GM12878 (cell line): ENCODE measurements at regions of chr20 and their contacts with region 1.

Region 1: DNA sequence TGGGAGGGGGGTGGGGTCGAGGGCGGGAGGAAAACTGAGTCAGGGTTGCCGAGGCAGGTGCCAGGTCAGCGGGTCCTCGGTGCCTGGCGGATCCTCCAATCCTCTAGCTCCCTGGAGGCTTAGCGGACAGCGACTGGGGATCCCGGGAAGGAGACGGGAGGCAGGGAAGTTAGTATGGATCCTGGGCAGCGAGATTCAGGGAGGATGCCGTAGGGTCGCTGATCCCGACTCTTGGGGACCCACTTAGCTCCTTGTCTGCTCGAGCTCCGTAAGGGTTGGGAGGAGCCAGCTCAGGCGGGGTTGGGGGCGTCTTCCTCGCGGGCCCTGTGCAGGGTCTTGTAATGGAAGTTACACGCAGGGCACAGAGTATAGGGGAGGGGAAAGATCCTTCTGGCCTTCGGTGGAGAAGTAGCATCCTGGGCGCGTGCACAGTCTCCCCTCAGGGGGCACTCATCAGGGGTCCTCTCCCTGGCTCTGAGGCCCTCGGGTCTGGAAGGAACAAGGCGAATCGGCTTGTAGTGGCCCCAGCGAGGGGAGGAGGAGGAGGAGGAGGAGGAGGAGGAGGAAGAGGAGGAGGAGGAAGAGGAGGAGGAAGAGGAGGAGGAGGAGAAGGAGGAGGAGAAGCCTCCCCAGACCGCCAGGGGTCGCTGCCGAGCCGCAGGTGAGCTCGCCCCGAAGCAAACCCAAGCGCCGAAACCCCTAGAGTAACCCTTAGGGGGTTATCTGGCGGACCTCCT is 6.4 kb upstream of the SLC12A5 start:
- DNase-seq: no peak
- ATAC-seq: peak; percentile 84
- H3K4me3 ChIP-seq: peak overlapping the region; percentile 38; the same call in 1 of the 2 replicates
- H3K27ac ChIP-seq: no peak overlapping the region
- H3K4me1 ChIP-seq: no peaks in the 10 kb centered on the region
- H3K27me3 ChIP-seq: peaks cover 2 to 4% of the 10 kb centered on the region in 2 experiments; a peak in 2 of 4 replicates
- CTCF ChIP-seq: peak; percentile 69 to 88 (median 71)
- EP300 ChIP-seq: no peak
- POLR2A ChIP-seq: no peak
- RAD21 ChIP-seq: peak; percentile 75

Region 2: GRCh38 chr20:45987108-45987780 is 35.3 kb before region 1 on chr20:
- CTCF ChIA-PET with region 1: interaction called, 13 read pairs
- POLR2A ChIA-PET with region 1: no interaction called
- RAD21 ChIA-PET with region 1: interaction called, 10 read pairs
- SMC1A ChIA-PET with region 1: interaction called, 3 read pairs
- in situ Hi-C with region 1: no loop called
- intact Hi-C with region 1: no loop called
- DNase-seq: no peak
- ATAC-seq: peak; percentile 100
- H3K4me3 ChIP-seq: no peak overlapping the region
- H3K27ac ChIP-seq: no peak overlapping the region
- H3K4me1 ChIP-seq: peaks cover 6% of the 10 kb centered on the region
- H3K27me3 ChIP-seq: no peaks in the 10 kb centered on the region; a peak in 1 of 4 replicates
- CTCF ChIP-seq: peak; percentile 92 to 96 (median 93)
- EP300 ChIP-seq: no peak
- POLR2A ChIP-seq: no peak
- RAD21 ChIP-seq: peak; percentile 83

Region 3: GRCh38 chr20:46078954-46079353 is 56.4 kb after region 1 on chr20:
- CTCF ChIA-PET with region 1: interaction called, 11 read pairs
- POLR2A ChIA-PET with region 1: no interaction called
- RAD21 ChIA-PET with region 1: interaction called, 3 read pairs
- SMC1A ChIA-PET with region 1: no interaction called
- in situ Hi-C with region 1: no loop called
- intact Hi-C with region 1: no loop called
- DNase-seq: no peak
- ATAC-seq: no peak
- H3K4me3 ChIP-seq: no peak overlapping the region
- H3K27ac ChIP-seq: no peak overlapping the region
- H3K4me1 ChIP-seq: no peaks in the 10 kb centered on the region
- H3K27me3 ChIP-seq: no peaks in the 10 kb centered on the region
- CTCF ChIP-seq: no peak
- EP300 ChIP-seq: no peak
- POLR2A ChIP-seq: no peak; the same call in 1 of the 2 replicates
- RAD21 ChIP-seq: no peak

Region 4: DNA sequence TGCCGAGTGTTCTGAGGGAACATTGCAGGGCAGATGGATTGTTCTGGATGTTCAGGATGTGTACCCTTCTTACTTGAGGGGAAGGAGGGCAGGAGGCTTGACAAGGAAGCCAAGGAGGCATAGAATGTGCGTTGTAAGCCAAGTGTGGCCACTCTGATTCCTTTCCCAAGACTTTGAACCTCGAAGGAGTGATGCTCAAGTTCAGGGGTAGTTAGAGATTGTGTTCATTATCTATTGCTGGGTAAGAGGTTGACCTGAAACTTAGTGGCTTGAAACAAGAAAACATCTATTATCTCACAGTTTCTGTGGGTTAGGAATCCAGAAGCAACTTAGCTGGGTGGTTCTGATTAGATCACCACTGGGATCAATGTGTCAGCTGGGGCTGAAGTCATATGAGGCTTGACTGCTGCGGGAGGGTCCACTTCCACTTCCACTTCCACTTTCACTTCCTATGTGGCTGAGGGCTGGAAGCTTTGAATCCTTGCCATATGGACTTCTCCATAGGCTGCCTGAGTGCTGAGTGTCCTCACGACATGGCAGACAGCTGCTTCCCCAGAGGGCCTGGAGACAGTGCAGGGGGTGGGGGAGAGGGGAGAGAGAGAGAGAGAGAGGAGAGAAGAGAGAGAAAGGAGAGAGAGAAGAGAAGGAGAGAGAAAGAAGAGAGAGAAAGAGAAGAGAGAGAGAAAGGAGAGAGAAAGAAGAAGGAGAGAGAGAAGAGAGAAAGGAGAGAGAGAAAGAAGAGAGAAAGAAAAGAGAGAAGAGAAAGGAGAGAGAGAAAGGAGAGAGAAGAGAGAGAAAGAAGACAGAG is 88.7 kb after region 1 on chr20:
- CTCF ChIA-PET with region 1: interaction called, 10 read pairs
- POLR2A ChIA-PET with region 1: interaction called, 6 read pairs
- RAD21 ChIA-PET with region 1: interaction called, 5 read pairs
- SMC1A ChIA-PET with region 1: interaction called, 7 read pairs
- in situ Hi-C with region 1: no loop called
- intact Hi-C with region 1: no loop called
- DNase-seq: peak; percentile 75
- ATAC-seq: peak; percentile 77
- H3K4me3 ChIP-seq: peak overlapping the region; percentile 7; the same call in 1 of the 2 replicates
- H3K27ac ChIP-seq: no peak overlapping the region
- H3K4me1 ChIP-seq: peaks cover 37% of the 10 kb centered on the region
- H3K27me3 ChIP-seq: no peaks in the 10 kb centered on the region
- CTCF ChIP-seq: no peak
- EP300 ChIP-seq: peak; percentile 33 to 51; a peak in 2 of 4 replicates
- POLR2A ChIP-seq: no peak
- RAD21 ChIP-seq: no peak

Region 5: DNA sequence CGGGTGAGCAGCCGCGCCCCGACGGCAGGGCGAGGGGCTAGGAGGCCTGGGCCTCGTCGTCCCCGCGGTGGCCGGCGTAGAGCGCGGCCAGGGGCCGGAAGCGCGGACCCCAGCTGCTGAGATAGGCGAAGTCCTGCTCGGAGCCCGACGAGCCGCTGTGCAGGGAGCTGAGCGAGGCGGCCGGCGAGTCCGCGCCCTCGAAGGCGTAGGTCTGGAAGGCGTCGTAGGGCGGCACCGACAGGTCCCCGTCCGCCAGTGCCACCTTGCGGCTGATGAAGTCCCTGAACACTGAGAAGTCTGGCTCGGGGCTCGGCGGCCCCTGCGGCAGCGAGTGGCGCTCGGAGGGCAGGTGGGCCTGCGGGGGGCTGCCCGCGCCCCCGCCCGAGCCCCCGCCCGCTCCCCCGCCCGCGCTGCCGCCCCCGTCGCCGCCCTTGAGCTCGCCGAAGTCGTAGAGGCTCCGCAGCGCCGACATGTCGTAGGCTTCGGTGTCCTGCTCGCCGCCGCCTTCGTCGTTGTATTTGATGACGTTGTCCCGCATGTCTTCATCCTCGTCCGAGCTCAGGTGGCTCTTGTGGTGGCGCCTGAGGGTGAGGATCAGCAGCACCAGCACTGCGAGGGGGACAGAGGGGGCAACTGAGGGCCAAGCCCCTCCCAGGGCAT is 152.0 kb after region 1 on chr20:
- CTCF ChIA-PET with region 1: interaction called, 13 read pairs
- POLR2A ChIA-PET with region 1: no interaction called
- RAD21 ChIA-PET with region 1: interaction called, 5 read pairs
- SMC1A ChIA-PET with region 1: interaction called, 11 read pairs
- in situ Hi-C with region 1: no loop called
- intact Hi-C with region 1: loop called (anchors 1 kb)
- DNase-seq: no peak
- ATAC-seq: peak; percentile 98
- H3K4me3 ChIP-seq: no peak overlapping the region
- H3K27ac ChIP-seq: no peak overlapping the region
- H3K4me1 ChIP-seq: no peaks in the 10 kb centered on the region
- H3K27me3 ChIP-seq: peaks cover 5 to 12% of the 10 kb centered on the region in 2 experiments; a peak in 3 of 4 replicates
- CTCF ChIP-seq: peak; percentile 51 to 81 (median 79)
- EP300 ChIP-seq: no peak
- POLR2A ChIP-seq: no peak
- RAD21 ChIP-seq: peak; percentile 56; the same call in 1 of the 2 replicates